Activated CD4-positive, alpha-beta T cell treated with anti-CD3 and anti-CD28 coated beads for 36 hours (primary cell): ENCODE measurements at regions of chr19 and their contacts with region 1.

Region 1: GRCh38 chr19:37906869-37907734 is at the start of gene SIPA1L3:
- DNase-seq: peak; percentile 97
- ATAC-seq: peak; percentile 98
- H3K4me3 Mint-ChIP-seq: peak within 1 kb of the TSS; percentile 73
- H3K27ac Mint-ChIP-seq: peak within 1 kb of the TSS; percentile 74
- H3K4me1 Mint-ChIP-seq: peaks cover 20% of the 10 kb centered on the region
- H3K27me3 Mint-ChIP-seq: no peaks in the 10 kb centered on the region
- total RNA-seq, gene SIPA1L3: 10.5 to 18.3 TPM

Region 2: DNA sequence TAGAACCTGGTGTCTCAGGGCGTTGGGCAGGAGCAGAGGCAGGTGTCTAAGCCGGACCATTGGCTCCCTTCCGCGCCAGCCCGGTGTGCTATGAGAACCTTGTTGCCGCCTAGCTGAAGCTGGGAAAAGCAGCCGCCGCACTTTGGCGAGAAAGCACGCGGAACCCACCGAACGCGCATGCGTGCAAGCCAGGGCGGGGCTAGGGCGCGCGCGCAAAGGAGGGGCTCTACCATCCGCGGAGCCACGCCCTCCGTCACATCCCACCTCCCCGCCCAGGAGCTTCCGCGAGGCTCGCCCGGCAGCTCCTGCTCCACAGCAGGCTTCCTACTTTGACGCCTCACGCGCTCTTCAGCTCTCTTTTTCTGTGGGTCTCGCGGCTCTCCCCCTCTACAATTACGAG is 52.0 kb before region 1 on chr19:
- CTCF ChIA-PET with region 1: no interaction called
- POLR2A ChIA-PET with region 1: no interaction called
- intact Hi-C with region 1: no loop called
- DNase-seq: peak; percentile 67
- ATAC-seq: peak; percentile 58
- H3K4me3 Mint-ChIP-seq: no peak overlapping the region
- H3K27ac Mint-ChIP-seq: no peak overlapping the region
- H3K4me1 Mint-ChIP-seq: peaks cover 2% of the 10 kb centered on the region
- H3K27me3 Mint-ChIP-seq: peaks cover 5% of the 10 kb centered on the region

Region 3: GRCh38 chr19:37966662-37967231 is 59.6 kb after region 1 on chr19:
- CTCF ChIA-PET with region 1: no interaction called
- POLR2A ChIA-PET with region 1: no interaction called
- intact Hi-C with region 1: no loop called
- DNase-seq: no peak
- ATAC-seq: no peak
- H3K4me3 Mint-ChIP-seq: no peak overlapping the region
- H3K27ac Mint-ChIP-seq: no peak overlapping the region
- H3K4me1 Mint-ChIP-seq: no peaks in the 10 kb centered on the region
- H3K27me3 Mint-ChIP-seq: no peaks in the 10 kb centered on the region

Region 4: GRCh38 chr19:38004521-38005223 is 97.6 kb after region 1 on chr19:
- CTCF ChIA-PET with region 1: interaction called, 10 read pairs
- POLR2A ChIA-PET with region 1: interaction called, 6 read pairs
- intact Hi-C with region 1: loop called (anchors 2 to 5 kb)
- DNase-seq: peak; percentile 41
- ATAC-seq: peak; percentile 51
- H3K4me3 Mint-ChIP-seq: no peak overlapping the region
- H3K27ac Mint-ChIP-seq: no peak overlapping the region
- H3K4me1 Mint-ChIP-seq: peaks cover 7% of the 10 kb centered on the region
- H3K27me3 Mint-ChIP-seq: no peaks in the 10 kb centered on the region

Region 5: GRCh38 chr19:38095411-38096308 is 188.6 kb after region 1 on chr19:
- CTCF ChIA-PET with region 1: interaction called, 15 read pairs
- POLR2A ChIA-PET with region 1: no interaction called
- intact Hi-C with region 1: loop called (anchors 1 to 5 kb)
- DNase-seq: peak; percentile 78
- ATAC-seq: peak; percentile 58
- H3K4me3 Mint-ChIP-seq: no peak overlapping the region
- H3K27ac Mint-ChIP-seq: no peak overlapping the region
- H3K4me1 Mint-ChIP-seq: no peaks in the 10 kb centered on the region
- H3K27me3 Mint-ChIP-seq: no peaks in the 10 kb centered on the region

Region 6: DNA sequence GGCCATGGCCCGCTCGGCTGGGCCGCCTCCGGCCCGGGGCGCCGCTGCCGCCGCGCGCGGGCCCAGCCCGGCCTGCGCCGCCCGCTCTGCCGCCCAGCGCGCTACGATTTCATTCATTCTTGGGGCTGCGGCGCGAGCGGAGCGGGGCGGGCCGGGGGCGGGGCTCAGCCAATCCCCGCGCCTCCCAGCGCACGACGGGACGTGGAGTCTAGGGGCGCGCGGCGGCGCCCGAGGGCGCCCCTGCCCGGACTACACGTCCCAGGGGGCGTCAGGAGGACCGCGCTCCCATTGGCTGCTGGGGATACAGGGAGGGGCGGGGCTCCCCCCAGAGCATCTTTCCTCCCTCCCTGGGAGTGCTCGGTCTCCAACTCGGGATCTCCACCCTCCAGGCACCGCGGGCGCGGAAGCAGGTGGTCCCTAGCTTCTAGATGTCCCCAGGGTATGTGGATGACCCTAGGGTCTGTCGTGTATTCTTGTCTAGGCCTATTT is 322.5 kb after region 1 on chr19:
- CTCF ChIA-PET with region 1: interaction called, 10 read pairs
- POLR2A ChIA-PET with region 1: interaction called, 7 read pairs
- intact Hi-C with region 1: loop called (anchors 1 to 5 kb)
- DNase-seq: peak; percentile 87
- ATAC-seq: peak; percentile 96
- H3K4me3 Mint-ChIP-seq: no peak overlapping the region
- H3K27ac Mint-ChIP-seq: no peak overlapping the region
- H3K4me1 Mint-ChIP-seq: peaks cover 8% of the 10 kb centered on the region
- H3K27me3 Mint-ChIP-seq: peaks cover 39% of the 10 kb centered on the region

Region 7: DNA sequence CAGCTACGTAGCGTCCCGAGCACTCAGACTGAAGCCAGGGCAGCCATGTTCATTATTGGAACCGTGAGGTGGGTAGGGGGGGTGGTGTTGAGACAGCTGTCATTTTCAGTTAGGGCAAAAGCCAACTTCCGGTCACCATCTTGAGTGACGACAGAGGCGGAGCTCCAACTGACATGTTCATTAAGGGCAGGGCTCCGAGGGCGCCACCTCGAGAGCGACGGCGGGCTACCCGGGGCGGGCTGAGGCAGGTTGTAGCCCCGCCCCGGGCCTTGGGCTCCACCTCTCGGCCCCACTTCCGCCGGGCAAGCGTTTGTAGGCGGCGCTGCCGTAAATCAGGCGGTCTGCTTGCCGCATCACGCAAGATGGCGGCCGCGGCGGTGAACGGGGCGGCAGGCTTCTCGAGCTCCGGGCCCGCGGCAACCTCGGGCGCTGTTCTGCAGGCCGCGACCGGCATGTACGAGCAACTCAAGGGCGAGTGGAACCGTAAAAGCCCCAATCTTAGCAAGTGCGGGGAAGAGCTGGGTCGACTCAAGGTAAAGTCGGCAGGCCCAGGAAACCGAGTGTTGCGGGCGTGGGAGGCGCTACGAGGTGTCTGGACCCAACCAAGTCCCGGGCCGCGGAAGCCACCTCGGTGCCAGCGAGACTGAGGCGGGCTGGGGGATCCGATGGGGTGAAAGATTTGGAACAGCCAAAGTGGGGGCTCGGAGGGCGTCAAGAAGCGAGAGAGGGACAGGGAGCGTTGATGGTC is 467.5 kb after region 1 on chr19 and contains the start of gene PSMD8:
- CTCF ChIA-PET with region 1: interaction called, 6 read pairs
- POLR2A ChIA-PET with region 1: no interaction called
- intact Hi-C with region 1: loop called (anchors 1 kb)
- DNase-seq: peak; percentile 99
- ATAC-seq: peak; percentile 99
- H3K4me3 Mint-ChIP-seq: peak within 1 kb of the TSS; percentile 97
- H3K27ac Mint-ChIP-seq: peak within 1 kb of the TSS; percentile 98
- H3K4me1 Mint-ChIP-seq: peaks cover 26% of the 10 kb centered on the region
- H3K27me3 Mint-ChIP-seq: peaks cover 5% of the 10 kb centered on the region
- total RNA-seq, gene PSMD8: 219 to 275 TPM